Gastrocnemius medialis (tissue), 4 donors: ENCODE measurements at regions of chrX and their contacts with region 1.

Region 1: GRCh38 chrX:34656842-34657725 is at the start of gene TMEM47:
- DNase-seq: peak; percentile 38 to 55
- ATAC-seq: peak; percentile 79 to 83
- H3K4me3 ChIP-seq: peak within 1 kb of the TSS; percentile 60 to 71 (median 68)
- H3K27ac ChIP-seq: peak within 1 kb of the TSS; percentile 76 to 93 (median 89)
- H3K4me1 ChIP-seq: peaks cover 0 to 3% of the 10 kb centered on the region in 2 donors
- H3K27me3 ChIP-seq: no peaks in the 10 kb centered on the region
- CTCF ChIP-seq: no peak
- POLR2A ChIP-seq: peak; percentile 92
- total RNA-seq, gene TMEM47: 30.6 to 95.8 (median 44.3) TPM

Region 2: GRCh38 chrX:33543757-33544156 is 1113.3 kb before region 1 on chrX:
- in situ Hi-C with region 1: no loop called
- intact Hi-C with region 1: no loop called
- DNase-seq: no peak
- ATAC-seq: no peak
- H3K4me3 ChIP-seq: no peak overlapping the region
- H3K27ac ChIP-seq: no peak overlapping the region
- H3K4me1 ChIP-seq: no peaks in the 10 kb centered on the region
- H3K27me3 ChIP-seq: no peaks in the 10 kb centered on the region
- CTCF ChIP-seq: no peak
- POLR2A ChIP-seq: no peak

Region 3: DNA sequence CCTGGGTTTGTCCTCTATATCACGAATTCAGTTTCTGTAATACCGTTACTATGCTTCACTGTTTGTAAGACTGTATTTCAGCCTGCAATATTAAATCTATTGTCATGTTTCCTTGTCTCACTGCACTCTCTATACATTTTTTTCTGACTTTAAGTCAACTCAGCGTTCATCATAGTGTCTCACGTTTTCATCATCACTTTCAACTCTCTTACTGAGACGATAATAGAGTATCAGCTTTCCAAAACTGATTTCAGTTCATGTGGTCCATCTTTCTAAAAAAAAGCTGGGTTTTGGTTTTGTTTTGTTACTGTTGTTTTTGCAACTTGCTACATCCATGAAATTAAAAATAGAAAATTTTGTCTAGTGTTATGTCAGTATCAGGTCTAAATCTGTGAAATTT is 147.7 kb before region 1 on chrX:
- in situ Hi-C with region 1: no loop called
- intact Hi-C with region 1: no loop called
- DNase-seq: no peak
- ATAC-seq: no peak
- H3K4me3 ChIP-seq: no peak overlapping the region
- H3K27ac ChIP-seq: no peak overlapping the region
- H3K4me1 ChIP-seq: no peaks in the 10 kb centered on the region
- H3K27me3 ChIP-seq: no peaks in the 10 kb centered on the region
- CTCF ChIP-seq: no peak
- POLR2A ChIP-seq: no peak

Region 4: DNA sequence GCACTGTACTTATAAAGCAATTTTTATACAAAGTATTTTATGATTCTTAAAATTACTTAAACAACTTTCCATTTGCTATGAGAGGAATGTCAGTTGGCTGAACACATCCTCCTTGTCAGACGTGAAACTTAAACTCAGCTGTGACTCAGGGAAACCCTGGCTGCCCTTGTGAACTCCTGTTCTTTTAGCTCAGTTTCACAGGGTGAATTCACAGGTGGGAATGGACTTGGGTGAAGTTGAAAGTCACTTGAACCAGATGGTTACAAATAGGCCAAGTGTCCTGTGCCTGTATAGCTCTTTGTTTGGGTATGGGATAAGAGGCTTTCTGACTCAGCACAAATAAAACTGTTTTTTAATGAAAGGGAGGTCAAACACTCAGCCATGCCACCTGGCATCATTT is 218.1 kb after region 1 on chrX:
- in situ Hi-C with region 1: no loop called
- intact Hi-C with region 1: loop called (anchors 5 kb)
- DNase-seq: peak; percentile 11 to 60
- ATAC-seq: peak; percentile 89 to 94
- H3K4me3 ChIP-seq: no peak overlapping the region
- H3K27ac ChIP-seq: peak overlapping the region; percentile 30 to 78 (median 64)
- H3K4me1 ChIP-seq: peaks cover 8 to 17% of the 10 kb centered on the region in 2 donors
- H3K27me3 ChIP-seq: no peaks in the 10 kb centered on the region
- CTCF ChIP-seq: no peak
- POLR2A ChIP-seq: no peak

Region 5: DNA sequence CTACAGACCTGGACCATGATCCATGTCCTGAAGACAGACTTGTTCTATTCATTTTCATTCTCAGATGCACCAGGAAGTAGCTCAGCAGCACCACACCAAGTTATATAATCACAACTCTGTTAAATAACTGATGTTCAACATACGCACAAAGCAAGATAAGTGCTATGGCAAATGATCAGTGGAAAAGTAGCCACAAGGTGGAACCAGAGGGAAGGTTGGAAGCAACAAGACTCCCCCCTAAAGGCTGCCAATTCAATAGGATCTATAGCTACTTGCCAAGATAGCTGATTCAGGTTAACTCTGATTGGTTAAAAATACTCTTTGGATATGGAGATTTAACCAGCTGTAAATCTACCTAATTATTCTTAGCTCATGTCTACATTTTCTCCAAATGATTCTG is 261.8 kb after region 1 on chrX:
- in situ Hi-C with region 1: no loop called
- intact Hi-C with region 1: loop called (anchors 2 kb)
- DNase-seq: no peak
- ATAC-seq: no peak
- H3K4me3 ChIP-seq: no peak overlapping the region
- H3K27ac ChIP-seq: peak overlapping the region in 1 of 4 donors; percentile 70
- H3K4me1 ChIP-seq: peaks cover 0 to 16% of the 10 kb centered on the region in 2 donors
- H3K27me3 ChIP-seq: no peaks in the 10 kb centered on the region
- CTCF ChIP-seq: no peak
- POLR2A ChIP-seq: no peak